Activated CD4-positive, alpha-beta T cell treated with anti-CD3 and anti-CD28 coated beads for 36 hours (primary cell): ENCODE measurements at regions of chr5 and their contacts with region 1.

Region 1: GRCh38 chr5:86968301-86968753 is 299.4 kb upstream of the RASA1 start:
- DNase-seq: no peak
- ATAC-seq: no peak
- H3K4me3 Mint-ChIP-seq: no peak overlapping the region
- H3K27ac Mint-ChIP-seq: no peak overlapping the region
- H3K4me1 Mint-ChIP-seq: peaks cover 2% of the 10 kb centered on the region
- H3K27me3 Mint-ChIP-seq: peaks cover 10% of the 10 kb centered on the region

Region 2: DNA sequence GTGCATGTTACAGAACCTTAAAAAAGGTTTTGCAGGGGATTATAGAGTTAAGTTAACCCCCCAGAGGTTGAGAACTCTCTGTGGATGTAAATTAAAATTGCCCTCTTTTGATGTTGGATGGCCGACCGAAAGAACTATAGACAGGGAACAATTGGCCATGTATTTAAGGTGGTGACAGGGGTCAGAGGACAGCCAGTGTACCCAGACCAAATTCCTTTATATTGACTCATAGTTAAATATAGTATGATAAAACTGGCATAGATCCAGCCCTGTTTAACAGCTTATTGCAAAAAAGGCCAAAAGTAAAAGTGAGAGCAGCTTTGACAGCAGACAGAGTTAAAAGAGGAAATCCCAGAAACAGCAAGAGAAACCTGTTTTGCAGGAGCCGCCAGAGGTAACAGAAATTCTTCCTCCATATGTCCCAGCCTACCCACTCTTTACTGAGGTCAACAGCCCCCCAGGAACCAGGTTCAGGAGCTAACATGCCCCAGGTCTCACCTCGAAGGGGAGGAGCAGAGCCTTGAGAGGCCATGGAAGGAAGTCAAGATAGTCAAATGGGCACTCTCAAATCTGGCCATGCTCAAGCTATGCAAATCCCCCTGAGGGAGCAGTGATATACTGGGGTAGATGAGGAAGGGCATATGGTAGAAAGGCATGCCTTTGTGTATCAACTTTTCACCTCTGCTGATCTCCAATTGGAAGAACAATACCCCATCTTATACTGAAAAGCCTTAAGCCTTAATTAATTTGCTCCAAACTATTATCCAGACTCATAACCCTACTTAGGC is 507.0 kb before region 1 on chr5:
- CTCF ChIA-PET with region 1: no interaction called
- POLR2A ChIA-PET with region 1: no interaction called
- intact Hi-C with region 1: no loop called
- DNase-seq: no peak
- ATAC-seq: no peak
- H3K4me3 Mint-ChIP-seq: no peak overlapping the region
- H3K27ac Mint-ChIP-seq: no peak overlapping the region
- H3K4me1 Mint-ChIP-seq: no peaks in the 10 kb centered on the region
- H3K27me3 Mint-ChIP-seq: no peaks in the 10 kb centered on the region

Region 3: DNA sequence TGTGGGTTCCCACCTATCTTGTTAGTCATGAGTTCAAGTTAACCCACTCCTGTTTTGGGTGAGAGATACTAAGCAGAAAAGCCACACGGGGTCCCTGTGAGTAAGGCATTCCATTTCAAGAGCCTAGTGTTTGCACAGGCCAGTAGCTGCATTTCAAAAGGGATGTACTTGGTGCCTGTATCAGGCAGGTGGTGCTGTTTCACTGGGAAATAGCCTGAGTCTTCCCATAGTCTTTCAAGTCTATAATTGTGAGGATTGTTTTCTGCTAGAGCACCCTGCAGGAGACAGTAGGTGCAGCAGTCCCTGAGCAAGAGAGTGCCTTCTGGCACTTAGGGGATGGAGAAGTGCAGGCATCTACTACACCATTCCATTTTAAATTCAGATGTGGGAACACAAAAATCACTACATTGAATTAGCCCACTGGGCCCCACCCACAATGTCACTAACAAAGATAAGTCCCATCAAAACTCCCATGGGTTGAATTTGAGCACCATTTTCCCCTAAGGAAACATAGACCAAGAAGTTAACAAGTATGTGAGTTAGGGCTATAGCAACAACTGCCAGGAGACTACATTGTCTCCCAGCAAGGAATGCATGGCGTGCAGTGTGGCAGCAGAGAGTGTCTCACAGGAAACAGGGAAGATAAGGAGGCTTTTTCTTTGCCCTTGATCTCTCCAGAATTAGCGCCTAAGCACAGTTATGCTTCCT is 87.4 kb before region 1 on chr5:
- CTCF ChIA-PET with region 1: interaction called, 25 read pairs
- POLR2A ChIA-PET with region 1: no interaction called
- intact Hi-C with region 1: loop called (anchors 1 to 2 kb)
- DNase-seq: peak; percentile 55
- ATAC-seq: peak; percentile 97
- H3K4me3 Mint-ChIP-seq: no peak overlapping the region
- H3K27ac Mint-ChIP-seq: no peak overlapping the region
- H3K4me1 Mint-ChIP-seq: no peaks in the 10 kb centered on the region
- H3K27me3 Mint-ChIP-seq: peaks cover 5% of the 10 kb centered on the region

Region 4: GRCh38 chr5:87008751-87009560 is 40.6 kb after region 1 on chr5:
- CTCF ChIA-PET with region 1: interaction called, 6 read pairs
- POLR2A ChIA-PET with region 1: interaction called, 3 read pairs
- intact Hi-C with region 1: loop called in 1 of 2 experiments (anchors 5 kb)
- DNase-seq: no peak
- ATAC-seq: no peak
- H3K4me3 Mint-ChIP-seq: no peak overlapping the region
- H3K27ac Mint-ChIP-seq: no peak overlapping the region
- H3K4me1 Mint-ChIP-seq: no peaks in the 10 kb centered on the region
- H3K27me3 Mint-ChIP-seq: no peaks in the 10 kb centered on the region